Activated naive CD4-positive, alpha-beta T cell treated with anti-CD3 and anti-CD28 coated beads, Interleukin-2, amount 10 ng/mL, durations not matched to agents 7 days and 5 days (primary cell): ENCODE measurements at regions of chr2 and their contacts with region 1.

Region 1: GRCh38 chr2:237572021-237572741 is 5.8 kb downstream of the PRLH start:
- DNase-seq: peak; percentile 90
- H3K4me3 Mint-ChIP-seq: no peak overlapping the region
- H3K27ac Mint-ChIP-seq: no peak overlapping the region
- H3K4me1 Mint-ChIP-seq: no peaks in the 10 kb centered on the region
- H3K27me3 Mint-ChIP-seq: peaks cover 26% of the 10 kb centered on the region

Region 2: GRCh38 chr2:237154082-237154638 is 418.0 kb before region 1 on chr2:
- CTCF ChIA-PET with region 1: interaction called, 30 read pairs
- DNase-seq: peak; percentile 65
- H3K4me3 Mint-ChIP-seq: no peak overlapping the region
- H3K27ac Mint-ChIP-seq: no peak overlapping the region
- H3K4me1 Mint-ChIP-seq: peaks cover 10% of the 10 kb centered on the region
- H3K27me3 Mint-ChIP-seq: peaks cover 24% of the 10 kb centered on the region

Region 3: DNA sequence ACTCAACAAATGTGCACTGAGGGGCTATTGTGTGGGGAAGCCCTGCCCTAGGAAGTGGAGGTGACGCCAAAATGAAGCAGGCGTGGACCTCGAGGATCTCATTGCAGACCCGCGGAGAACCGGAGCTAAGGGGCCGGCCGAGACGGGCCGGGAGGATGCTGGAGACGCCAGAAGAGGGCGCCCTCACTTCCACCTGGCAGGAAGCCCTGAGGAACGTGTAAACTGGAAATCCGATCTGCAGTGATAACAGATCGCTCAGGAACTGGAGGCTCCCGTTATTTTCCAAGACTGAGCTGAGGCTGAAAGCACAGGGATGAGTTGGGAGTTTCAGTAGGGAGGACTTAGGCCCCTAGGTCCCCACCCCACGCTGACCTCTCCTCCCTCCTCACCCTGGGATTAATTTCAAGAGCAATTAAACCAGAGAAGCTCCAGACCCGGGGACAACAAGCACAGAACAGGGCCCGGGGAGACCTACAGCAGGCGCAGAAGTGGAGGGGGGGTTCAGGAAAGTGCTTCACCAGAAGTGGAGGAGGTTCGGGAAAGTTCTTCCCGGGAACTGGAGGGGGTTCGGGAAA is 150.6 kb before region 1 on chr2:
- CTCF ChIA-PET with region 1: interaction called, 23 read pairs
- DNase-seq: peak; percentile 86
- H3K4me3 Mint-ChIP-seq: no peak overlapping the region
- H3K27ac Mint-ChIP-seq: no peak overlapping the region
- H3K4me1 Mint-ChIP-seq: peaks cover 15% of the 10 kb centered on the region
- H3K27me3 Mint-ChIP-seq: peaks cover 20% of the 10 kb centered on the region

Region 4: DNA sequence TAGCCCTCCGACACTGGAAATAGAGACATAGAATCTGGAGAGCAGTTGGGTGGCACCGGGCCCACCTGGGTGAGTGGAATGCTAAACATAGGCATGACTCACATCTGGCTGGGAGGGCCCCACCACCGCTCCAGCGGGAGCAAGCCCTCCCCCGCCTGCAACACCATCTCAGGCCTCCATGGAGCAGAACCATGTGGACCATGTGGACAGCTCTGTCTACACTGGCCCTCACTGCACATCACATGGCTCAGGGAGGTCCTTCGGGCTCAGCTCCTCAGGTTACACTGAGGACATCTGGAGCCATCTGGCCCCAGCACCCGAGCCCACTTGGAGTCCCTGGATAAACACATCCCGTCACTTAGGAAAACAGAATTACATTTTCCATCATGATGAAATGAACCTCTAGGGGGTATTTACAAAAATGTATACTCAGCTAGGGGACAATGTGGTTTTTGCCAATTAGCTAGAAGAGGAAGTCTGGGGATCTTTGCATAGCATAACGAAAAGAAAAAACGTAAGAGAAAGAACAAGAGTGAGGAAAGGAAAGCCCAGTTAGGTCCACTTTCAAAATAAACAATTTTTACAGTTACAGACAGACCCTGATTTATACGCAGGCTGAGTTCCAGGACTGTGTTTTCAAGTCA is 115.9 kb before region 1 on chr2:
- CTCF ChIA-PET with region 1: no interaction called
- DNase-seq: no peak
- H3K4me3 Mint-ChIP-seq: no peak overlapping the region
- H3K27ac Mint-ChIP-seq: no peak overlapping the region
- H3K4me1 Mint-ChIP-seq: peaks cover 11% of the 10 kb centered on the region
- H3K27me3 Mint-ChIP-seq: peaks cover 4% of the 10 kb centered on the region

Region 5: DNA sequence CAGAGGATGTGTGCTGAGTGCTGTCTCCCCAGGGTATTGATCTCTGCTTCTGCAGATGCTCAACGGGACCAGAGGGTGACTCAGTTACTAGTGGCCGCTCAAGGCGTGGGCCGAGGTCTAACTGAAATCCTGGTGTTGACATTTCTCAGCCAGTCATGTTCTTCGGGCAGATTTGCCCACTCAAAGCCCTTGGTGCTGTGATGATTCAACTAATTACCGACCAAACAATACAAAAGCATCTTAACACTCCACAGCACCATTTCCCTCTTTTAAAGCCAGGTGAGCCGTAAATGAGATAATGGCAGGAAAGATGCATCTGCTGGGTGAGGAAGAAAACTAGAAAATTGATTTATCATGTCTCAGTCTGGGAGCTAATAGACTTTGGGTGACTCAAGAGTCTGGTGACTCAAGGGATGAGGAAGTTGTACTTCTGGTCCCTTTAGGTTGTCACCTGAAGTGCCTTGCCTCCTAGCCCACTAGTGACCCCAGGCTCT is 38.5 kb before region 1 on chr2:
- CTCF ChIA-PET with region 1: interaction called, 13 read pairs
- DNase-seq: no peak
- H3K4me3 Mint-ChIP-seq: no peak overlapping the region
- H3K27ac Mint-ChIP-seq: no peak overlapping the region
- H3K4me1 Mint-ChIP-seq: no peaks in the 10 kb centered on the region
- H3K27me3 Mint-ChIP-seq: peaks cover 12% of the 10 kb centered on the region

Region 6: GRCh38 chr2:237561221-237561620 is 11.0 kb before region 1 on chr2:
- CTCF ChIA-PET with region 1: interaction called, 14 read pairs
- DNase-seq: no peak
- H3K4me3 Mint-ChIP-seq: no peak overlapping the region
- H3K27ac Mint-ChIP-seq: no peak overlapping the region
- H3K4me1 Mint-ChIP-seq: peaks cover 16% of the 10 kb centered on the region
- H3K27me3 Mint-ChIP-seq: peaks cover 26% of the 10 kb centered on the region

Region 7: GRCh38 chr2:237978058-237978712 is 406.0 kb after region 1 on chr2:
- CTCF ChIA-PET with region 1: no interaction called
- DNase-seq: no peak
- H3K4me3 Mint-ChIP-seq: no peak overlapping the region
- H3K27ac Mint-ChIP-seq: peak overlapping the region; percentile 17
- H3K4me1 Mint-ChIP-seq: peaks cover 62% of the 10 kb centered on the region
- H3K27me3 Mint-ChIP-seq: no peaks in the 10 kb centered on the region